Activated B cell treated with CpG ODN at 0.5 μM for 24 hours (primary cell): ENCODE measurements at regions of chr1 and their contacts with region 1.

Region 1: GRCh38 chr1:84077476-84078107 is 66.5 kb upstream of the PRKACB start:
- DNase-seq: peak; percentile 80
- ATAC-seq: peak; percentile 90
- H3K4me3 Mint-ChIP-seq: peak overlapping the region; percentile 91
- H3K27ac Mint-ChIP-seq: peak overlapping the region; percentile 75
- H3K4me1 Mint-ChIP-seq: peaks cover 11% of the 10 kb centered on the region
- H3K27me3 Mint-ChIP-seq: no peaks in the 10 kb centered on the region
- CTCF ChIP-seq: no peak

Region 2: DNA sequence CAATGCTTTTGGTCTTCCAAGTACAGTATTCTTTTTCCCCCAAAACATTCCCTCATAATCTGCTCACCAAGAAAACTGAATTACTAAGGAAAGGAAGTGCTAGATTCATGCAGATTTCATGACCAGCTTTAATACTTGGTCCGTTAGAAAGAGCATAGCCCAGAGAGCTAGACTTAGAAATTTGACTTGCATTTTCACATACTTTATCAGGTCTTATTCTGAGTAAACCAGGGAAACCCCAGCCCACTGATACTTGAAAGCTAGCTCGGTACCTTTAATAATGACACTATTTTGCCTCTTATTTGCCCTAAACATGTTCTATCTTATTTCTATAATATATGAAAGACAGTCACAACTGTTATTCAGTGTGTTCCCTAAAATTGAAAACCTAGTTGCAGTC is 283.2 kb before region 1 on chr1:
- CTCF ChIA-PET with region 1: no interaction called
- POLR2A ChIA-PET with region 1: no interaction called
- intact Hi-C with region 1: no loop called
- DNase-seq: no peak
- ATAC-seq: no peak
- H3K4me3 Mint-ChIP-seq: no peak overlapping the region
- H3K27ac Mint-ChIP-seq: no peak overlapping the region
- H3K4me1 Mint-ChIP-seq: no peaks in the 10 kb centered on the region
- H3K27me3 Mint-ChIP-seq: no peaks in the 10 kb centered on the region
- CTCF ChIP-seq: no peak

Region 3: GRCh38 chr1:83998498-83999315 is 78.9 kb before region 1 on chr1 and contains the start of gene TTLL7:
- CTCF ChIA-PET with region 1: no interaction called
- POLR2A ChIA-PET with region 1: no interaction called
- intact Hi-C with region 1: loop called (anchors 1 kb)
- DNase-seq: peak; percentile 65
- ATAC-seq: peak; percentile 86
- H3K4me3 Mint-ChIP-seq: peak within 1 kb of the TSS; percentile 82
- H3K27ac Mint-ChIP-seq: no peak within 1 kb of the TSS
- H3K4me1 Mint-ChIP-seq: peaks cover 13% of the 10 kb centered on the region
- H3K27me3 Mint-ChIP-seq: peaks cover 41% of the 10 kb centered on the region
- CTCF ChIP-seq: no peak
- total RNA-seq, gene TTLL7: 0.12 TPM in 1 of 2 replicates, not detected in the other

Region 4: DNA sequence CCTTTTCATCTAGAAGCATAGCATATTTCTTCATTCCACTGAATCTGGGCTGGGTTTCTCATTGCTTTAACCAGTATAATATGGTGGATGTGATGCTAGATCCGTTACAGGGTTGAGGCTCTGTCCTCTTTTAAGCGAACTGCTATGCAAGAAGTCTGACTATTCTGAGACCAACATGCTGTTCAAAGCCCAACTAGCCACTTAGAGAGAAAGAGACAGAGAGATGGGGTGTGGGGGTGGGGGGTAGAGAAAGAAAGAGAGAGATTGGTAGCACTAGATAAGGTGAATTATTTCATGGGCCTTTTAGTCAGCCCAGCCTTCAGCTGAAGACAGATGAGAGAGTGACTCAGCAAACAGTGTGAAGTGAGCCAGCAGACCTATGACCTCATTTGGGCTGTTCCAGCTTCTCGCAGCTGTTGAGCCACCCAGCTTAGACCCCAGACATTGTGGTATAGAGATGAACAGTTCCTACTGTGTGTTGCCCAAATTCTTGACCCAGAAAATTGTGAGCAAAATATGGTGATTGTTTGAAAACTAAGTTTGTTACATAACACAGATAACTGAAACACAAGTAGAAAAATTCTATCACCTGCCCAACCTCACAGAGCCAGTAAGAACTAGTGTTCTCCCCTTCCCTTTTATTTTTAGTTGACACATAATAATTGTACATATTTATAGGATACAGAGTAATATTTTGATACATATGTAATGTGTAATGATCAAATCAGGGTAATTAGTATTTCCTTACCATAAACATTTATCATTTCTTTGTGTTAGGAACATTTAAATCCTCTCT is 25.8 kb after region 1 on chr1:
- CTCF ChIA-PET with region 1: no interaction called
- POLR2A ChIA-PET with region 1: no interaction called
- intact Hi-C with region 1: no loop called
- DNase-seq: no peak
- ATAC-seq: peak; percentile 34
- H3K4me3 Mint-ChIP-seq: no peak overlapping the region
- H3K27ac Mint-ChIP-seq: no peak overlapping the region
- H3K4me1 Mint-ChIP-seq: no peaks in the 10 kb centered on the region
- H3K27me3 Mint-ChIP-seq: no peaks in the 10 kb centered on the region
- CTCF ChIP-seq: no peak

Region 5: GRCh38 chr1:84174051-84174556 is 96.5 kb after region 1 on chr1:
- CTCF ChIA-PET with region 1: no interaction called
- POLR2A ChIA-PET with region 1: no interaction called
- intact Hi-C with region 1: loop called (anchors 5 kb)
- DNase-seq: no peak
- ATAC-seq: no peak
- H3K4me3 Mint-ChIP-seq: no peak overlapping the region
- H3K27ac Mint-ChIP-seq: no peak overlapping the region
- H3K4me1 Mint-ChIP-seq: peaks cover 36% of the 10 kb centered on the region
- H3K27me3 Mint-ChIP-seq: no peaks in the 10 kb centered on the region
- CTCF ChIP-seq: no peak

Region 6: DNA sequence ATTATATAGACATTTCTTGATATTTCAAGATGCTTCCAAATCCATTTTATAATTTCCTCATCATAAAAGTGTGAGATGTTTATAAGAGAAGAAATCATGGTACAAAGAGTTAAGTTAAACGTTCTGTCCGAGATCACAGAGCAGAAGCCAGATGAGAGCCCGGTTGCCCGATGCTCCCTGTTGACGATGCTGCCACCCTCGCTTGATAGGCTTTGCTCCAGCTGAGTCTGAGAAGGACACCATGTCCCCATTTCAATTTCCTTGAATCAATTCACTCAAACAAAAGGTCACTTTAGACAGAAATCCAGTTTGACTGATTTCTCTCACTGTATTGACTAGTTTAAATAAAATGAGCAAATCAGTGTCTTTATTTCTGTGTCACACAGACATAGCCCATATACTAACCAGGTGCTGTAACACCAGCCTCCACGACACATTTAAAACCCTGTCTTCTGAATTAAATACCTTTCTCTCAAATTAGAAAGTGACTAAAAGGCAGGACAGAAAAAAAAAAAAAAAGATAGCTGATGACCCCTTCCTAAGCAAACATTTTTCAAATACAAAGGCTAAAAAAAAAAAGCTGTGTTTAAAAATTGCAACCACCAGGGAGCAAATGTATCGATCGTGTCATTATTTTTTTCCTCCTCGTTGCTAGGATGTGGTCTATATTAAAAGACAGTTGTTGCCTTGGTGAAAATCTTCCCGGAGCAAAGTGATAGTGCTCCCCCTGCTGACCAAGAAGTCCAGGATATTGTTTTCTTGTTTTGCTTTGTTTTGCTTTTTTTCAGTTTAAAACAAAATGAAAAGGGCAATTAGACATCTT is 355.9 kb after region 1 on chr1:
- CTCF ChIA-PET with region 1: no interaction called
- POLR2A ChIA-PET with region 1: no interaction called
- intact Hi-C with region 1: loop called (anchors 5 kb)
- DNase-seq: no peak
- ATAC-seq: peak; percentile 59
- H3K4me3 Mint-ChIP-seq: peak overlapping the region; percentile 65
- H3K27ac Mint-ChIP-seq: peak overlapping the region; percentile 15
- H3K4me1 Mint-ChIP-seq: peaks cover 9% of the 10 kb centered on the region
- H3K27me3 Mint-ChIP-seq: no peaks in the 10 kb centered on the region
- CTCF ChIP-seq: peak; percentile 48

Region 7: DNA sequence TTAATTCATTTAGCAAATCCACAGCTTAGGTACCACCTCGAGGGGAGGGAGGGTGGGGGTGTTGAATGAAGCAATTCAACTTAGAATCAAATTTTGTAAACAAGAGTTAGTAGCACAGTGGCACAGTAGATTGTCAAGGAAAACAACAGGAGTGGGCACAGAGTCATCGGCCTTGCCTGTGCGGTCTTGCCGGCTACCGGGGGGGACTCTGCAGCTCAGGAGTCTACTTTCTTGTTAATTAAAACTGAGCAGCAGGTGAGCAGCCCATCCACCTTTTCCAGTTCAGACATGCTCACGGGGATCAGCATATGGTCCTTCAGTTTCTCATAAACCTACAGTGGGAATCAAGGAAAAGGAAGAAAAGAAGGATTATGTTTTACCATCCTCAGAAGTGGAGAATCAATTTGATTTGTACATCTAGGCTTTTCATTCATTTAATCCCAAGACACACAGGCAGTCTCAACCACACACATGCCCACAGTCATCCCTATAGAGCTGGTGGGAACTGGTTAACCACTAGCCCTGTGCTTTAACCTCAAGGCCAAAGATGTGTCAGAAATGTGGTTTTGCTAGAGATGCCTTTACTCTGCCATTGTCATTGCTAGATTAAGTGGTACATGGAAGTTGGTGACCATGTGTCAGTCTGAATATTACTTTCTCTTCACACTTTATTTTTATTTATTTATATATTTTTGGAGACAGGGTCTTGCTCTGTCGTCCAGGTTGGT is 1243.8 kb after region 1 on chr1:
- CTCF ChIA-PET with region 1: no interaction called
- POLR2A ChIA-PET with region 1: no interaction called
- intact Hi-C with region 1: no loop called
- DNase-seq: no peak
- ATAC-seq: no peak
- H3K4me3 Mint-ChIP-seq: no peak overlapping the region
- H3K27ac Mint-ChIP-seq: no peak overlapping the region
- H3K4me1 Mint-ChIP-seq: no peaks in the 10 kb centered on the region
- H3K27me3 Mint-ChIP-seq: no peaks in the 10 kb centered on the region
- CTCF ChIP-seq: no peak